ENCODE measurements at regions of chr12 and their contacts with region 1.

Region 1: DNA sequence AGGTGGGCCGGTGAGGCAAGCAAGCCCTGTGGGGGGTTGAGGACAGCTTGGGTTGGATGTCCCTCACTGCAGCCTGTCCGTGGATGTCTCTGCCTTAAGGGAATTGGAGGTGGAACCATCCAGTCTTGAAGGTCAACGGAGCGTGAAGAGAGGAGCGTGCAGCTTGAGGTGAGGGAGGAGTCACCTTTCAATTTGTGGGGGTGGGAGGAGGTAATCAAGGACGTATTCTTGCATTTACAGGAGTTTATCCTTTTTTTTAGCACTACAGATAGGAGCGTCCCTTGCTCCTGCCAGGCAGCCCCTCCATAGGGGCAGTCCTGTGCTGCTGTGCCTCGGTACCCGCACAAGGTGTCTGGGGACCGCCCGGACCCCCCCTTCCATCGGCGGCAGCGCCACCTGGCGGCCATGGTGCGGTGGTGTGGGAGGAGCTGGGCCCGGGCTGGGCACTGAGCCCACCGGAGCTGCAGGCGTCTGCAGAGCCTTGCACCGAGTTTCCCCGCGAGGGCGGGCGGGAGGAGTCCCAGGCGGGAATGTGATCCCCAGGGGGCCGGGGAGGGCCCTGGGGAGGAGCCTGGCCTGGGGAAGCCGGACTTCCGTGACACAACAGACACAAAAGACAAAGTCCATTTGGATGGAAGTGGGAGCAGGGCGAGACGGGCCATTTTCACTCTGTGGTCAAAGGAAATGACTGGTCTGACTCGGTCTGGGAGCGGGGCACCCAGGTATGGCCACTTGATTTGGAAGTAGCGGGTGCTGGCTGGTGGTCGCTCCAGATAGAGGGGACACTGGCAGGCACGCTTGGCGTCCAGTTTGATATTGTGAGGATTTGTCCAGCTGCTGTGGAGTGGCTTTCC is 923 bp downstream of the DNAJC22 start:
- DNase-seq: peak in 1 of 2 experiments; percentile 88
- H3K4me3 ChIP-seq: peak overlapping the region; percentile 62
- H3K27ac ChIP-seq: no peak overlapping the region
- H3K4me1 ChIP-seq: peaks cover 28% of the 10 kb centered on the region
- H3K27me3 ChIP-seq: peaks cover 37% of the 10 kb centered on the region
- CTCF ChIP-seq: peak; percentile 98

Region 2: DNA sequence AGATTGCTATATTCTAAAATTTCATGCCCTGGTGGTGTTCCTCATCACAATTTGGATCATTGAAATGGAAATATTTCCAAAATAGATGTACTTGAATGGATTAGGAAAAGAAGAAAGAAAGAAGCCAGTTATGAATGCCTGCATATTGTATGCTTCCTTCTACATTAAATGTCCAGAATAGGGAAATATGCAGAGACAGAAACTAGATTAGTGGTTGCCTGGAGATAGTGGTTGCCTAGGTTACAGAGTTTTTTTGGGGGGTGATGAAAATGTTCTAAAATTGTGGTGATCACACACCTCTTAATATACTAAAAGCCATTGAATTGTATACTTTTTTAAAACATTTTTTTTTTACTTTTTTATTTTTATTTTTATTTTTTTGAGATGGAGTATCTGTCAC is 176.7 kb before region 1 on chr12:
- CTCF ChIA-PET with region 1: no interaction called
- POLR2A ChIA-PET with region 1: no interaction called
- intact Hi-C with region 1: no loop called
- DNase-seq: no peak
- H3K4me3 ChIP-seq: no peak overlapping the region
- H3K27ac ChIP-seq: no peak overlapping the region
- H3K4me1 ChIP-seq: no peaks in the 10 kb centered on the region
- H3K27me3 ChIP-seq: no peaks in the 10 kb centered on the region
- CTCF ChIP-seq: no peak

Region 3: DNA sequence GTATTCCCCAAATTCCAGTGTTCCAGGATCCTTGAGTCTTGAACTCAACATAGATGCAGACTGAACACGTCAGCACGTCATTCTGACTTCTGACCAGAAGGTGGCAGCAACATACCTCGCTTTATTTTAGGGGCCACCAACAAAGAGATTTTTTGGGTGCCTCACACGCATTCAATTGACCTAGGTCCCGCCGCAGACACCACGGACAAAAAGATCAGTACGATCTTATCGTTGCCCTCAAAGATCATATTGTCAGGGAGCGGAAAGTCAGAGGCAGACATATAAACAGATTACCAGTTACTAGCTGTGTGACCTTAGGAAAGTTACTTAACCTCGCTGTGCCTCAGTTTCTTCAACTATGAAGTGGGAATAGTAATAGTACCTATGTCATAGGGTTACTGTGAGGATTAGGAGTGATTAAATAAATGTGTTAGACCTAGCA is 59.2 kb before region 1 on chr12:
- CTCF ChIA-PET with region 1: no interaction called
- POLR2A ChIA-PET with region 1: interaction called, 5 read pairs
- intact Hi-C with region 1: loop called (anchors 2 kb)
- DNase-seq: peak in 1 of 2 experiments; percentile 55
- H3K4me3 ChIP-seq: no peak overlapping the region
- H3K27ac ChIP-seq: no peak overlapping the region
- H3K4me1 ChIP-seq: no peaks in the 10 kb centered on the region
- H3K27me3 ChIP-seq: no peaks in the 10 kb centered on the region
- CTCF ChIP-seq: peak; percentile 93

Region 4: DNA sequence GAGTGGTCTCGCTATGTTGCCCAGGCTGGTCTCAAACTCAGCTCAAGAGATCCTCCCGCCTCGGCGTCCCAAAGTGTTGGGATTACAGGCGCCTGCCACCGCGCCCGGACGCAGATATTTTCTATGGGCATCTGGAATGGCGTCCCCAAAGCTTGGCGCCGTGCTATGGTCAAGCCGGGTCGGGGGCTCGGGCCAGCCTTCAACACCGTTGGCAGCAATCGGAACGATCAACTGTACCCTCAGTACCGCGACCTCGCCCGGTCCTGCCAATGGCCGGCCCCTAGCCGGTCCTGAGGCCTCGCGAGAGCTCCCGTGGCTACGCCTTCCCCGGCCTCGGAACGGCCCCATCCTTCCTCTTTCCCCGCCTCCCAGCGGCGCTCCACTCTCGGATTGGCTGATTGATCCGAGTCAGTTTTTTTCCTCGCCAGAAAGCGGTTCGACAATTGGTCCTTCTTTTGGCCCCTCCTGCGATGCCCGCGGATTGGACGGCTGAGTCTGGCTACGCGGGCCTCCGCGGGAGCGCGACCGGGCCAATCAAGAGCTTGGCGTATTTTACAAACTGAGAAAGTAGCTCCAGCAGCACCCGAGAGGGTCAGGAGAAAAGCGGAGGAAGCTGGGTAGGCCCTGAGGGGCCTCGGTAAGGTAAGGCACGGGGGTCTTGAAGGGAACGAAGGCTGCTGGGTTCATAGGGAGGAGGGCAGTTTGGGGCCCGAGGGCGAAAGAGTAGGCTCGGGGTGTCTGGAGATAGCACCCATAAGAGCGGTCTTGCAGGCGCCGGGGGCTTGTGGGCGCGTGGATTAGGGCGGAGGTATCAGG is 24.7 kb before region 1 on chr12 and contains the start of gene TROAP:
- CTCF ChIA-PET with region 1: interaction called, 11 read pairs
- POLR2A ChIA-PET with region 1: interaction called, 3 read pairs
- intact Hi-C with region 1: no loop called
- DNase-seq: peak; percentile 93 to 98
- H3K4me3 ChIP-seq: peak within 1 kb of the TSS; percentile 68
- H3K27ac ChIP-seq: 0 out of 2 replicates have a peak within 1 kb of the TSS, but pooled peaks have one; percentile 6
- H3K4me1 ChIP-seq: peaks cover 9% of the 10 kb centered on the region; the same call in 1 of the 2 replicates
- H3K27me3 ChIP-seq: no peaks in the 10 kb centered on the region
- CTCF ChIP-seq: no peak
- total RNA-seq, gene TROAP: 79.4 and 79.9 TPM in 2 replicates

Region 5: GRCh38 chr12:49366652-49367380 is 19.2 kb after region 1 on chr12:
- CTCF ChIA-PET with region 1: interaction called, 10 read pairs
- POLR2A ChIA-PET with region 1: interaction called, 7 read pairs
- intact Hi-C with region 1: no loop called
- DNase-seq: peak; percentile 81 to 98
- H3K4me3 ChIP-seq: peak overlapping the region; percentile 93
- H3K27ac ChIP-seq: peak overlapping the region; percentile 73
- H3K4me1 ChIP-seq: peaks cover 36% of the 10 kb centered on the region
- H3K27me3 ChIP-seq: no peaks in the 10 kb centered on the region
- CTCF ChIP-seq: no peak; the same call in 1 of the 2 replicates

Region 6: GRCh38 chr12:49538510-49539403 is 191.1 kb after region 1 on chr12 and contains the start of gene KCNH3:
- CTCF ChIA-PET with region 1: no interaction called
- POLR2A ChIA-PET with region 1: no interaction called
- intact Hi-C with region 1: no loop called
- DNase-seq: peak; percentile 41 to 71
- H3K4me3 ChIP-seq: peak within 1 kb of the TSS; percentile 50
- H3K27ac ChIP-seq: no peak within 1 kb of the TSS
- H3K4me1 ChIP-seq: peaks cover 21% of the 10 kb centered on the region
- H3K27me3 ChIP-seq: peaks cover 18% of the 10 kb centered on the region
- CTCF ChIP-seq: no peak
- total RNA-seq, gene KCNH3: not detected in 2 replicates

Region 7: DNA sequence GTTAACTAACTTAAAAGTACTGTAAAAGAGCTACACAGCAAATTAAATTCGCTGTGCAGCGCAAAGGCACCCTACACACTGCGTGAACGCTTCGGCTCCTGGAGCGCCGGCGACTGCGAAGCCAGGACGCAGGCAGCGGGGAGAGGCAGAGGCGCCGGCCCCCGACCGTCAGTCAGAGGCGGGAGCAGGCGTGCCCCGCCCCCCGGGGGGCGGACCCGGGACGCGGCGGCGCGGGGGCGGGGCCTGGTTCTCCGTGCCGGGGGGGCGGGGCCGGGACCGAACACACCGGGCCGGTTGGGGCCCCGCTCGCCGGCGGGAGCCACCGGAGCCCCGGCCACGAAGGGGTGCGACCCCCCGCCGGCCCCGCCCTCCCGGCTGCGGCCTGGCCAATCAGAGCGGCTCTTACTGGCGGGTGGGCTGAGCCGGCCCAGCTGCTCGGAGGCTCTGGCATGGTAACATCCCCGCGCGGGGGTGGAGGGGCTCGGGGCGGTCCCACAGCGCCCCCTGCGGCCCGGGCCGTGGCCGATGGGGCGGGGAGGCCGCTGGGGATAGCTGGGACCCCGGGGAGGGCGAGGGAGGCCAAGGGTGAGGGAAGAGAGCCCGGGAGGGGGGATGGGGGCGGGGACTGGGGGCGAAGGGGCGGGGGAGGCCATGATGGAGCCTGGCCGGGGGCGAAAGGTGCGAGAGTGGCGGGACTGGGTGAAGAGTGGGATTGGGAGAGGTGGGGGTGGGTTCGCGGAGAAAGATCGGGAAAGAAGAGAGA is 275.7 kb after region 1 on chr12 and contains the start of gene PRPF40B:
- CTCF ChIA-PET with region 1: interaction called, 6 read pairs
- POLR2A ChIA-PET with region 1: no interaction called
- intact Hi-C with region 1: loop called (anchors 5 kb)
- DNase-seq: peak; percentile 56 to 88
- H3K4me3 ChIP-seq: peak within 1 kb of the TSS; percentile 97
- H3K27ac ChIP-seq: peak within 1 kb of the TSS; percentile 56
- H3K4me1 ChIP-seq: peaks cover 48% of the 10 kb centered on the region
- H3K27me3 ChIP-seq: no peaks in the 10 kb centered on the region
- CTCF ChIP-seq: peak; percentile 54
- total RNA-seq, gene PRPF40B: 27.5 and 28.9 TPM in 2 replicates